ENCODE measurements at regions of chr12 and their contacts with region 1.

Region 1: GRCh38 chr12:53079226-53080117 is at the start of gene SPRYD3:
- DNase-seq: peak; percentile 94
- H3K4me3 ChIP-seq: peak within 1 kb of the TSS; percentile 69
- H3K27ac ChIP-seq: peak within 1 kb of the TSS; percentile 97
- H3K27me3 ChIP-seq: no peaks in the 10 kb centered on the region
- CTCF ChIP-seq: no peak
- polyA plus RNA-seq, gene SPRYD3: 15.4 and 17.6 TPM in 2 replicates

Region 2: DNA sequence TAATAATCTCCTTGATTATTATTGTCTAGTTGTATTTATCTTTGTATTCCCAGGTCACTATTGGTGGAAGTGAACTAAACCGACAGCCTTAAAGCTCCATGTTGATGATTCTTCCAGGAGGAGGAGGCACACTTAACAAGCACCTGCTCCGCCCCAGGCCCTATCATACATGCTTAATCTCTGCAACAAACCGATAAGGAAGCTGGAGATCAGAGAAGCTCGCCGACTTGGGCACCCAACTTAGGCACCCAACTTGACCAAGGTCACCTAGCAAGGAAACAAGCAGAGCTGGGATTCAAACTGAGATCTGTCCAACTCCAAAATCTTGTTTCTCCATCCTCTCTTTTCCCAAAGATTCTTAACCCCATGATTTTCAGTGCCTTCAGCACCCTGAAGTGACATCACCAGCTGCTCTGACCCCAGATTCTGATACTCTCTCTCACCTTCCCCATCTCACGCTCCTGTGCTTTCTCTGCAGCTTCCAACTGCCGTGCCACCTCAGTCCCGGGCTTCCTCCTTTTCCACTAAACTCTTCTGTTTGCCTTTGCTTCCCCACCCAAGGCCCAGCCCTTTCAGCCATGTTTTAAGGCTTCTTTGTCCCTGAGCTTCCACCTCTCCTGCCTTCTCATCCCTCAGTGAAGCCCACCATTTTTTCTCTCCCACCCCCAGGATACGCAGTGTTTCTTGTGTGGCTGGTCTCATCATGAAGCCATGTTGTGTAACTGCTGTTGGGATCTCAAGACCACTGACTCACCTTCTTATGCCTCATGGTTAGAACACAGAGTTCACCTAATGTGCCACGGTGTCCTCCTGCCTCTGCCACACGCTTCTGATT is 137.2 kb before region 1 on chr12:
- CTCF ChIA-PET with region 1: no interaction called
- POLR2A ChIA-PET with region 1: no interaction called
- DNase-seq: no peak
- H3K4me3 ChIP-seq: no peak overlapping the region
- H3K27ac ChIP-seq: no peak overlapping the region
- H3K27me3 ChIP-seq: no peaks in the 10 kb centered on the region
- CTCF ChIP-seq: no peak

Region 3: DNA sequence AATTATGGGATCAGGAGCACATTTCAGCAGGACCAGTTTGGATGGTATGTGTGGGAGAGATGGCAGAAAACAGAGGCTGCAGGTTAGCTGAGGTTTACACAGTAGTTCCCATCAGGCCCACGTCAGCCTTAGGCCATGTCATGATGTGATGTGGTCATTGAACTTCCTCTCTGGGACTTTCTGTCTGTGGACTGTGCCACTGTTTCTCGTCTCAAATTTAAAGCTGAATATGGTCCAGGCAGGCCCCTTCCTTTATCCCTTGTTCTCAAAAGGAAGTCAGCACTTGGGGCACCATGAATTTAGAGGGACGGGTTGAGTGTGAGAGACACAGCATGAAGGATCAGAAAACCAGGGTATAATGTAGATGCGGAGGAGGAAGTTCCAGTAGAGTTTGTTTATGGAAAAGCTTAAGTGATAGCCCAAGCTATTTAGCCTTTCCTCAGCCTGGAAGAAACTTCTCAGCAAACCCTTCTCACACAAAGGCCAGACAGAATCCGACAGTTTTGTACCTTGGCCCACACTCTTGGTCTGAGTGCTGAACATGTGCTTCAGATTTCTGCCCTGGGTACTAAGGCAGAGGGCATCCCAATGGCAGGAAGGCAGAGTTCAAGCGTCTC is 14.4 kb after region 1 on chr12:
- CTCF ChIA-PET with region 1: interaction called, 29 read pairs
- POLR2A ChIA-PET with region 1: interaction called, 64 read pairs
- DNase-seq: no peak
- H3K4me3 ChIP-seq: no peak overlapping the region
- H3K27ac ChIP-seq: peak overlapping the region; percentile 43
- H3K27me3 ChIP-seq: no peaks in the 10 kb centered on the region
- CTCF ChIP-seq: no peak

Region 4: DNA sequence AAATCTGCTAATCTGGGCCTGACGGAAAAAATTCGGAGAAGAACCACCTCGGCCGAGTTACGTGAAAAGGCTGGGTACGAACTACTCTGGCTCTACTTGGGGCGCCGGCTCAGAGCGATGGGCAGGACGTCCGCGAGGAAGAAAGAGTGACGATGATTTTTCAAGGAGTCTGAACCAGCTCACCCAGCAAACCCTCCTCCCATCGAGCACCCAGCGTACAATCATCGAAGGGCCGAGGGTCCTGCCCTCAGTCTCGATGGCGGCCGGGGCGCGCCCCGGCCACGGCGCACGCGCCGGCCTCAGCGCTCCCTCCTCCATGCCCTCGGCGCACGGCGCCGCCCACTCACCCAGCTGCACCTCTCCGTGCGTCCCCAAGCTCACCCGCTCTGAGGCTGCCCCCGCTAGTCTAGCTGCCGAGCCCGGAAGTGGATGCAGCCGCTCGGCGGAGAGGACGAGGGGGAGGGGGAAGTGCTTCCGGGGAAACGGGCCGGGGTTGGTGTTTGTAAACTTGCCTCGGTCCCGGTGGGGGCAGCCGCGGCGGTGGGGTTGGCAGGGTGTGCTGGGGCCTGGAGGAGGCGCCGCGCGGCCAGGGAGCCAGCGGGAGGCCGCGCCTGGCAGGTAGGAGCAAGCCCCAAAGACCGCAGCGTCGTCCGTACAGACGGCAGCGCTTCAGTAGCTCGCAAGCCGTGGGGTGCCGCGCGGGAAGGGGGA is 100.9 kb after region 1 on chr12 and contains the starts of genes CSAD and ZNF740:
- CTCF ChIA-PET with region 1: no interaction called
- POLR2A ChIA-PET with region 1: interaction called, 16 read pairs
- DNase-seq: peak; percentile 94
- H3K4me3 ChIP-seq: peak within 1 kb of the TSS; percentile 78
- H3K27ac ChIP-seq: peak within 1 kb of the TSS; percentile 95
- H3K27me3 ChIP-seq: no peaks in the 10 kb centered on the region
- CTCF ChIP-seq: no peak
- polyA plus RNA-seq, gene CSAD: 18.9 and 21.6 TPM in 2 replicates
- polyA plus RNA-seq, gene ZNF740: 20.9 and 21.7 TPM in 2 replicates